Activated naive CD4-positive, alpha-beta T cell treated with anti-CD3 and anti-CD28 coated beads, Interleukin-2, amount 10 ng/mL, durations not matched to agents 7 days and 5 days (primary cell): ENCODE measurements at regions of chr1 and their contacts with region 1.

Region 1: GRCh38 chr1:172429331-172430127 is 9.0 kb downstream of the C1orf105 start:
- DNase-seq: peak; percentile 73
- H3K4me3 Mint-ChIP-seq: no peak overlapping the region
- H3K27ac Mint-ChIP-seq: peak overlapping the region; percentile 43
- H3K4me1 Mint-ChIP-seq: peaks cover 25% of the 10 kb centered on the region
- H3K27me3 Mint-ChIP-seq: no peaks in the 10 kb centered on the region

Region 2: GRCh38 chr1:172002725-172003345 is 426.7 kb before region 1 on chr1:
- CTCF ChIA-PET with region 1: interaction called, 20 read pairs
- DNase-seq: peak; percentile 41
- H3K4me3 Mint-ChIP-seq: no peak overlapping the region
- H3K27ac Mint-ChIP-seq: no peak overlapping the region
- H3K4me1 Mint-ChIP-seq: no peaks in the 10 kb centered on the region
- H3K27me3 Mint-ChIP-seq: no peaks in the 10 kb centered on the region

Region 3: DNA sequence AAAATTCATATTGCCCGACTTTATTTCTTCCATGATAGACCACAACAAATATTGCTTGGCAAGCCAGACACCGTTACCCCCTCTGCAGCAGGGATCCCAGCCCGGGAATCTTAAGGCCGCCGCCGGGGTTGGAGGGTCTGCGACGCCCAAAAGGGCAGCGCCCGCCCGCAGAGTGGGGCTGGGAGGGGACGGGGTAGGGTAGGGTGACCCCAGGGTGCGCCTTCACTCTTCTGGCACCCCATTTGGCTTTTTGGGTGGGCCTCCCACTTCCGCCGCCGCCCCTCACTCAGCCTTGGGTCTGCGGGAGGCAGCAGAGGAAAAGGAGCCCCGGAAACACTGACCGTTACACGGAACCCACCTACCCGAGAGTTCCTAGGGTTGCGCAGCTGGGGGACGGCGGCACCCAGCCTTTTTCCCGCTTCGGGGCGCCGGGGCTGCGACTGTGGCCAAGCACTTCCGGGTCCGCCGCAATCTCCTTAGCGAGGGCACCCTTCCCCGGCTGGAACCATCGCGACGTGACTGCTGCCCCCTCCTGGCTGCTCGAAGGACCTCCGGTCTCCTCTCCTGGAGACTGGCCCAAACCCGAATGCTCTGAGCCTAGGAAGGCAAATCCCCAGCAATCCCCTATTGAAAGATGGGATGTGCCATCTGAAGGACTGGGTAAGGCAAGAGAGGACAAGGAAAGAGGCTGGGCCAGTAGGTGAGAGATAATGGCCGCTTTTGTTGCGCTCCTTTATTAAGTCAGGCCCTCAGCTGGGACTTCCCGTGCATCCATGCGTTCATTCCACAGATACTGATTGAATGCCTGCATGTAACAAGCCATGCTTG is 14.3 kb after region 1 on chr1 and contains the start of gene PIGC:
- CTCF ChIA-PET with region 1: interaction called, 74 read pairs
- DNase-seq: peak; percentile 95
- H3K4me3 Mint-ChIP-seq: peak within 1 kb of the TSS; percentile 89
- H3K27ac Mint-ChIP-seq: peak within 1 kb of the TSS; percentile 88
- H3K4me1 Mint-ChIP-seq: peaks cover 36% of the 10 kb centered on the region
- H3K27me3 Mint-ChIP-seq: no peaks in the 10 kb centered on the region